CD4-positive, alpha-beta T cell (primary cell): ENCODE measurements at regions of chr15 and their contacts with region 1.

Region 1: GRCh38 chr15:82540055-82540983 is at the start of gene RPS17:
- DNase-seq: peak; percentile 96 to 99 (median 98)
- ATAC-seq: peak; percentile 91
- H3K4me3 ChIP-seq: peak within 1 kb of the TSS; percentile 85
- H3K4me3 Mint-ChIP-seq: peak within 1 kb of the TSS; percentile 99
- H3K27ac ChIP-seq: peak within 1 kb of the TSS; percentile 81 to 86
- H3K27ac Mint-ChIP-seq: peak within 1 kb of the TSS; percentile 97
- H3K4me1 ChIP-seq: peaks cover 32% of the 10 kb centered on the region
- H3K4me1 Mint-ChIP-seq: peaks cover 39% of the 10 kb centered on the region
- H3K27me3 ChIP-seq: no peaks in the 10 kb centered on the region
- H3K27me3 Mint-ChIP-seq: no peaks in the 10 kb centered on the region
- CTCF ChIP-seq: peak; percentile 99
- total RNA-seq, gene RPS17: 3,141 to 3,180 TPM

Region 2: DNA sequence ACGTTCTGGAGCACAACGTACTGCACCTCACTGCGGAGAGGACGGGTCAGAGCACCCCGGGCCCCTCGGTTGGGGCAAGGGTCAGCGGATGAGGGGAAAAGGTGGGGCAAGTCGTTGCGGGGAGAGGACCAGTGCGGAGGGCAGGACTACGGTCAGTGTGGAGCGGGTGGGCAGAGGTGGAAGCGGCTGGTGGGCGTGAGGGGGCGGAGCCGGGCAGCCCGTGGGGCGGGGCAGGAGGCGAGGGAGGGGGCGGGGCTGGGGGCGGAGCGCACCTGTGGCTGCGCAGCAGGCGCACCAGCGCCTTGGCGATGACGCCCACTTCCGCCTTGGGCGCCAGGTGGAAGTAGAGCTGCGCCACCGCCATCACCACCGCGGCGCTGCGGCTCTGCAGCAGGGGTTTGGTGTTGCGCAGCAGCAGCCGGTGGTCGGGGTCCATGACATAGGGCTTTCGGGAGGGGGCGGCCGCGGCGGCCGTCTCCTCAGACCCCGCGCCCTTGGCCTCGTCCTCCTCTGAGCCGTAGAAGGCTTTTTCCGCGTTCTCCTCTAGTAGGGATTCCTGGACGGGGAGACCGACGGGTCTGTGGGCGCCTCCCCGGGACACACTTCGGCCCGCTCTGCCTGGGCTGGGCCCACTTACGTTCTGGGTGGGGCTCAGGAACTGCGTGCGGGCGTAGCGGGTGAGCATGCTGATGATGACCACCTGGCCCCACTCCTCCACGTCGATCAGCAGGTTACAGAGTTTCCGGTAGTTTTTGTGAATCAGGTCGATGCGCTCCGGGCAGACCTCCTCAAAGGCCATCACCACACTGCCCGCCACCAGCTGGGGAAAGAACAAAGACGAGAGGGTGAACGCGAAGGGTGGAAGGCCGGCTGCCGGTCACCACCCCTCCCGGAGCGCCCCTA is 140.1 kb after region 1 on chr15:
- CTCF ChIA-PET with region 1: no interaction called
- POLR2A ChIA-PET with region 1: interaction called, 20 read pairs
- intact Hi-C with region 1: loop called in 1 of 2 experiments (anchors 5 kb)
- DNase-seq: peak; percentile 74 to 94 (median 82)
- ATAC-seq: peak; percentile 98
- H3K4me3 ChIP-seq: peak overlapping the region; percentile 91
- H3K4me3 Mint-ChIP-seq: peak overlapping the region; percentile 94
- H3K27ac ChIP-seq: peak overlapping the region; percentile 70 to 74
- H3K27ac Mint-ChIP-seq: peak overlapping the region; percentile 95
- H3K4me1 ChIP-seq: peaks cover 19% of the 10 kb centered on the region
- H3K4me1 Mint-ChIP-seq: peaks cover 15% of the 10 kb centered on the region
- H3K27me3 ChIP-seq: no peaks in the 10 kb centered on the region
- H3K27me3 Mint-ChIP-seq: no peaks in the 10 kb centered on the region
- CTCF ChIP-seq: peak; percentile 35

Region 3: DNA sequence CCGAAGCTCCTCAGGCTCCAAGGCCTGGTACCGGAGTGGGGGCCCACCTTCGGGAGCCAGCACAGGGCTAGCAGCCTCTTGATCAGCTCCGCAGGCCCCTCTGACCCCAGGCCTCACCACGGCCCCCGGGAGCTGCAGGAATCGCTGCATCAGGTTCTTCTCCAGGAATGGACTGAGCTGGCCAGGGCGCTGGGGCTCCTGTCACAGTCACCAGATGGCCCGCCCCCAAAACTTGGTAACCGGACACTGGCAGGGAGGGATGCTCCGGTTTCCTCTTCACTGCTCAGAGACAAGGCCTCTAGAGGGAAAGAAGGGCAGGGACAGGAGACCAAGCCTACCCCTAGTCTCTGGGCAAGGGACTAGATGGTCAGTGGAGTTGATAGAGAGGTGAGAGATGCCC is 159.4 kb after region 1 on chr15:
- CTCF ChIA-PET with region 1: no interaction called
- POLR2A ChIA-PET with region 1: no interaction called
- intact Hi-C with region 1: no loop called
- DNase-seq: no peak
- ATAC-seq: no peak
- H3K4me3 ChIP-seq: no peak overlapping the region
- H3K4me3 Mint-ChIP-seq: no peak overlapping the region
- H3K27ac ChIP-seq: no peak overlapping the region
- H3K27ac Mint-ChIP-seq: no peak overlapping the region
- H3K4me1 ChIP-seq: no peaks in the 10 kb centered on the region
- H3K4me1 Mint-ChIP-seq: no peaks in the 10 kb centered on the region
- H3K27me3 ChIP-seq: no peaks in the 10 kb centered on the region
- H3K27me3 Mint-ChIP-seq: peaks cover 18% of the 10 kb centered on the region
- CTCF ChIP-seq: no peak

Region 4: DNA sequence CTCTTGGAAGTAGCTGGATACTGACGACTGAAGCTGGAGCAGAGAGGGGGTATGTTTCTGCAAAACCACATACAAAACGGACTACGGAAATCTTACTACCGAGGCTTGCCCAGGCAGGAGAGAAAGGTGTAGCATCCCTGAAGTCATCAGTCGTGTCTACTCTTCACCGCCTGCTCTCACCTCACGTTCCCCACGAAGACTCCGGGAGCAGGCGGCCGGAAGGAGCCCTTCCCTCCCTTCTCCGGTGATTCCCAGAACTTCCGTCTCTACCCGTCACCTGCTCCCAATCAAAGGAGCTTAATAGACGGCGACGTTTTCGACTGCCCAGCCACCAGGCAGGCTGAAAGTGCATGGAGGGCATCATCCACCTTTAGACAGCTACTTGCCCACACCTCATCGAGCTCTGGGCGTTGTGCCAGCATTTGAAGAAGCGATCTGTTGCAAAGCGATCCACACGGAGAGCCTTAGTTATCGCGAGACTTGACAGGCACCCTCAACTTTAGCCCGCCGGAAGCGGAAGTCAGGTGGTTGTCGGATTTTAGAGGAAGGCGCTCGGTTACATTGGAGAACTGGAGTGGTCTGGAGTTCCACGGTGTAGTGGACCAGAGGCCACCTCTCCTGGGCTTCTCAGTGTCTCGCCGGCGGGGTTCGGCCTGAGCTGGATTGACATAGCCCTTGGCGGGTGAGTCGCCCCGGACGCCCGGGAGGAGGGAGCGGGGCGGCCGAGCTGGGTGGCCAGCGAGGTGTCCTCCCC is 445.5 kb after region 1 on chr15 and contains the start of gene RAMAC:
- CTCF ChIA-PET with region 1: interaction called, 10 read pairs
- POLR2A ChIA-PET with region 1: interaction called, 20 read pairs
- intact Hi-C with region 1: loop called (anchors 1 to 5 kb)
- DNase-seq: peak; percentile 84 to 98 (median 92)
- ATAC-seq: peak; percentile 92
- H3K4me3 ChIP-seq: peak within 1 kb of the TSS; percentile 94
- H3K4me3 Mint-ChIP-seq: peak within 1 kb of the TSS; percentile 97
- H3K27ac ChIP-seq: peak within 1 kb of the TSS; percentile 54 to 65
- H3K27ac Mint-ChIP-seq: peak within 1 kb of the TSS; percentile 87
- H3K4me1 ChIP-seq: peaks cover 18% of the 10 kb centered on the region
- H3K4me1 Mint-ChIP-seq: peaks cover 27% of the 10 kb centered on the region
- H3K27me3 ChIP-seq: no peaks in the 10 kb centered on the region
- H3K27me3 Mint-ChIP-seq: no peaks in the 10 kb centered on the region
- CTCF ChIP-seq: no peak
- total RNA-seq, gene RAMAC: 25.5 to 26.5 TPM

Region 5: DNA sequence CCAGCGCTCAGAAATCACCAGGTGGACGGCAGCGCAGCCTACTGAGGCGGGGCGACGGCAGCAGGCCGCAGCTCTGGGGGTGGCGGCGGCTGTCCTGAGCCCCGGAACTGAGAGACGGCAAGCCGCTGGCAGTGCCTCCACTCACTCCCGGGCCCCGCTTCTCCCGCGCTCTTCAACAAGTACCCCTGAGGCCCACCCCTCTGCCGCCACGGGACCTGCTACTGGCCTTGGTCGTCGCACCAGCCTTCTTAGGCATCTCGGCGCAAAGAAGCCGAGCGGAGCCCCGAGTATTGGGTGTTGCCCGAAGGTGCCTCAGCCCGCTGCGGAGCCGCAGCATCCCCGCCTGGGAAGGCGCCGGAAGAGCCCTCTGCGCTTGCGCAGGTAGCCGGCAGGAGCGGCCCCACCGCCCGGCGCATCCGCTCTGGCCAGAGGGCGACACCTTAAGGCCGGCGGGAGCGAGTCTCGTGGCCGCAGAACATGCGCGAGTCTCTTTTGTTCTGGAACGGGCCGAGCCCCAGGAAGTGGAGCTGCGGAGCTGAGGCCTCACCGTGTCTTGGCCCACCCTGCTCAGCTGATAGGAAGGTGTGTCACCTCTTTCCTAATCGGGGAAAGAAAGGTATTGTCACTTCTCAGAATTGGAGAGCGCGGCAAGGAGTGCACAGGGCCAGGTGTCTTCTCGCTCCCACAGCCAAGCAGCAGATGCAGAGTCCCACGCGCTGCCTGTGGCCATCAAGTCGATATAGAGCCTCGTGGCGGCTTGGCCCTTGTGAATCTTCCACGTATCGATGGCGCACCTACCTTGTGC is 471.2 kb after region 1 on chr15 and contains the start of gene C15orf40:
- CTCF ChIA-PET with region 1: interaction called, 11 read pairs
- POLR2A ChIA-PET with region 1: interaction called, 21 read pairs
- intact Hi-C with region 1: loop called (anchors 2 to 5 kb)
- DNase-seq: peak; percentile 68 to 94 (median 82)
- ATAC-seq: peak; percentile 81
- H3K4me3 ChIP-seq: peak within 1 kb of the TSS; percentile 82
- H3K4me3 Mint-ChIP-seq: peak within 1 kb of the TSS; percentile 100
- H3K27ac ChIP-seq: peak within 1 kb of the TSS; percentile 70 to 84
- H3K27ac Mint-ChIP-seq: peak within 1 kb of the TSS; percentile 88
- H3K4me1 ChIP-seq: peaks cover 24% of the 10 kb centered on the region
- H3K4me1 Mint-ChIP-seq: peaks cover 56% of the 10 kb centered on the region
- H3K27me3 ChIP-seq: no peaks in the 10 kb centered on the region
- H3K27me3 Mint-ChIP-seq: no peaks in the 10 kb centered on the region
- CTCF ChIP-seq: no peak
- total RNA-seq, gene C15orf40: 7.4 to 11.0 TPM

Region 6: DNA sequence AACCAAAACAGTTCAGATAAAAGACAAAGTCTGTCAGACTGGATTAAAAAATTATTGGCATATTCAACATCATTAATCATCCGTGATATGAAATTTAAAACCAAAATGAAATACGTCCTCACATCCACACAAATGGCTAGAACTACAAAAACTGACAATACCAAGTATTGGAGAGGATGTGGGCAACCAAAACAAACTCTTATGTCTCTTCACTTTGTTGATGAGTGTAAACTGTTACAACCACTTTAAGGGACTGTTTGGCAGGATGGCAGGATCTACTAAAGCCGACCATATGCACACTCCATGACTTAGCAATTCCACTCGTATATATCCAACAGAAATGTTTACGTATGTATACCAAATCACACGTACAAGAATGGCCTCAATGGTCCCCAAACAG is 495.9 kb after region 1 on chr15:
- CTCF ChIA-PET with region 1: no interaction called
- POLR2A ChIA-PET with region 1: no interaction called
- intact Hi-C with region 1: no loop called
- DNase-seq: peak in 1 of 14 experiments; percentile 4
- ATAC-seq: no peak
- H3K4me3 ChIP-seq: no peak overlapping the region
- H3K4me3 Mint-ChIP-seq: no peak overlapping the region
- H3K27ac ChIP-seq: no peak overlapping the region
- H3K27ac Mint-ChIP-seq: no peak overlapping the region
- H3K4me1 ChIP-seq: no peaks in the 10 kb centered on the region
- H3K4me1 Mint-ChIP-seq: peaks cover 39% of the 10 kb centered on the region
- H3K27me3 ChIP-seq: no peaks in the 10 kb centered on the region
- H3K27me3 Mint-ChIP-seq: no peaks in the 10 kb centered on the region
- CTCF ChIP-seq: no peak